Naive thymus-derived CD4-positive, alpha-beta T cell (primary cell): ENCODE measurements at regions of chr1 and their contacts with region 1.

Region 1: DNA sequence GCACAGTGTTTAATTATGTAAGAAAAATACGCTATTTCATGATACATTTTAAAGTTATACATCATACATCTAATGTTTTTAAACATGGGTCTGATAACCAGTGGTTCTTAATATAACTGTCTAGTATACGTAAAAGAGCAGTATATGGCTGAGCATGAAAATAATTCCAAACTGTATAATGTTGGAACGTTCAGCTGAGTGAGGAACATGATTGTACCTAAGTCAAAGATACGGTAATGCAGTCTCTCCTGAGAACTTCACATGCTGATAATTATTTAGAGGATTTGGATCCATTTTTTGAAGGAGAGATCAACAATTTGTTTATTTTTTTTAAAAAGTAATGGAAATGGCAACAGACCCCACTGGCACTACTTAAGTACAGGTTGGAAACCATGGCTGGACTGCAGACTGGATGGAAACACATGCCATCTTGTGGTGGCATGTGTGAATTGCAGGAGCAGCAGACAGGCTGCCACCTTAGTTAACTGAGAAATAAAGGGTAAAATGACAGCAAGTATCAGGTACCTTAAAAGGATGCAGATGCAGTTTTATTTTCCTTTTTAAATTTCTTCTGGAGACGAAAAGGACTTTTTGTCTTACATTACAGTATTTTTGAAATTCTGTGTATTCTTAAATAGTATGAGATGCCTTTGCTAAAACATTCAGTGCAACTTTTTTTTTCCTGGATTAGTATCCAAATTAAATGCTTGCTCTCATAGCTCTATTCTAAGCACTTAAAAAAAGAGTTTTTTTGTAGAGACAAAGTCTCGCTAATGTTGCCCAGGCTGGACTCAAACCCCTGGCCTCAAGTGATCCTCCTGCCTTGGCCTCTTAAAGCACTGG is 73.8 kb downstream of the MTR start:
- DNase-seq: peak in 8 of 9 donors; percentile 14 to 58 (median 46)
- ATAC-seq: peak; percentile 73
- H3K4me3 ChIP-seq: no peak overlapping the region
- H3K4me3 Mint-ChIP-seq: no peak overlapping the region
- H3K27ac ChIP-seq: no peak overlapping the region
- H3K27ac Mint-ChIP-seq: peak overlapping the region in 1 of 9 donors; percentile 41
- H3K4me1 ChIP-seq: no peaks in the 10 kb centered on the region
- H3K4me1 Mint-ChIP-seq: peaks cover 0 to 16% (median 0%) of the 10 kb centered on the region in 7 donors
- H3K27me3 ChIP-seq: no peaks in the 10 kb centered on the region
- H3K27me3 Mint-ChIP-seq: no peaks in the 10 kb centered on the region

Region 2: DNA sequence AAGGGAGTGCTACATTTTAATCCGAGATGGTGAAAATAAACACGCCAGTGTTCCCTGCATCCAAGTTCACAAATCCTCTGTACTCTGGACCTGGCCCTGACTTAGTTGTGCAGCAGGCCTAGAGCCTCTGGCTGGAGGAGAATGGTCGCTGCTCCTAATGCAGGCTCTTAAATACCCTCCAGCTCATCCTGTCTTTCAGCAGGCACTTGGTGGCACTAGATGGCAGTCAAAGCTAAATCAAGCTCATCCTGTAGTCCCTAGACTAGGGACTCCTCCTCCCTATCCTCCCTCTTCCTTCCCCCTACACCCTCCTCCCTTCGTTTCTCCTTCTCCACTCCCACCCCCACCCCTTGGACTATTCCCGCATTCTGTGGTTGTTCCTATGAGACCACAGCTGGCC is 115.3 kb before region 1 on chr1:
- CTCF ChIA-PET with region 1: interaction called, 3 read pairs
- POLR2A ChIA-PET with region 1: no interaction called
- intact Hi-C with region 1: loop called in 1 of 2 experiments (anchors 1 kb)
- DNase-seq: no peak
- ATAC-seq: no peak
- H3K4me3 ChIP-seq: no peak overlapping the region
- H3K4me3 Mint-ChIP-seq: no peak overlapping the region
- H3K27ac ChIP-seq: no peak overlapping the region
- H3K27ac Mint-ChIP-seq: no peak overlapping the region
- H3K4me1 ChIP-seq: no peaks in the 10 kb centered on the region
- H3K4me1 Mint-ChIP-seq: no peaks in the 10 kb centered on the region
- H3K27me3 ChIP-seq: no peaks in the 10 kb centered on the region
- H3K27me3 Mint-ChIP-seq: peaks cover 0 to 8% (median 5%) of the 10 kb centered on the region in 5 donors

Region 3: GRCh38 chr1:236759252-236759859 is 109.5 kb before region 1 on chr1:
- CTCF ChIA-PET with region 1: interaction called, 3 read pairs
- POLR2A ChIA-PET with region 1: no interaction called
- intact Hi-C with region 1: loop called (anchors 1 kb)
- DNase-seq: peak in 6 of 9 donors; percentile 13 to 57 (median 42)
- ATAC-seq: peak; percentile 59
- H3K4me3 ChIP-seq: no peak overlapping the region
- H3K4me3 Mint-ChIP-seq: peak overlapping the region in 5 of 10 donors; percentile 5 to 66 (median 19)
- H3K27ac ChIP-seq: no peak overlapping the region
- H3K27ac Mint-ChIP-seq: peak overlapping the region in 1 of 9 donors; percentile 78
- H3K4me1 ChIP-seq: no peaks in the 10 kb centered on the region
- H3K4me1 Mint-ChIP-seq: peaks cover 0 to 5% (median 4%) of the 10 kb centered on the region in 7 donors
- H3K27me3 ChIP-seq: no peaks in the 10 kb centered on the region
- H3K27me3 Mint-ChIP-seq: peaks cover 0 to 10% (median 0%) of the 10 kb centered on the region in 5 donors

Region 4: GRCh38 chr1:236888903-236889302 is 20.1 kb after region 1 on chr1:
- CTCF ChIA-PET with region 1: no interaction called
- POLR2A ChIA-PET with region 1: no interaction called
- intact Hi-C with region 1: no loop called
- DNase-seq: no peak
- ATAC-seq: no peak
- H3K4me3 ChIP-seq: no peak overlapping the region
- H3K4me3 Mint-ChIP-seq: no peak overlapping the region
- H3K27ac ChIP-seq: no peak overlapping the region
- H3K27ac Mint-ChIP-seq: peak overlapping the region in 1 of 9 donors; percentile 47
- H3K4me1 ChIP-seq: no peaks in the 10 kb centered on the region
- H3K4me1 Mint-ChIP-seq: no peaks in the 10 kb centered on the region
- H3K27me3 ChIP-seq: no peaks in the 10 kb centered on the region
- H3K27me3 Mint-ChIP-seq: no peaks in the 10 kb centered on the region